ENCODE measurements at regions of chr3 and their contacts with region 1.

Region 1: DNA sequence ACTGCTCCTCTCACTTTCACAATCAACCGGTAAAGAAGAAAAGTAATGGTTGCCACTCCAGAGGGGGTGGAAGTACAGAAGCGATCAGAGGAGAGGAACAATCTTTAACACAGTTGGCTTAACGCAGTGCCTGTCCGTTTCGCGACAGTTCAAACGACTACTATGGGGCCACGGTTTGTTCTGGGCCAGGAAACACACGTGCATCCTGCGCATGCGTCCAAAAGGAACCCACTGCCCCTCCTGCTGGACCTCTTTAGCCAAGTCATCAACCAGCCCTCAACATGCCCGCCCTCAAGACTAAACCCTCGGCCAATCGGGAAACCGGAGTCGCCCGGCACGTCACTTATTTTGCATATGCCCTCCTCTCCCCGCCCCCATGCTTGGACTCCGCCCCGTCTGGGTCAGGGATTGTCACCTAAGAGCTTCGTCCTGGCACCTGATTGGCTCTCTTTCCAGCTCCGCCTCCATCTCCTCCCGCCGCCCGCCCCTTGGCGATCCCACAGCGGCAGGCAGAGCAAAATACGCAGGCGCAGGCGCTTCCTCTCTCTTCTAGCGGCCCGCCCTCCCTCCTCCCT is 345 bp upstream of the CDV3 start:
- DNase-seq: peak; percentile 100
- H3K4me3 ChIP-seq: peak overlapping the region; percentile 45 to 99 (median 84)
- H3K27ac ChIP-seq: peak overlapping the region; percentile 6 to 98 (median 90)
- H3K27me3 ChIP-seq: no peaks in the 10 kb centered on the region
- CTCF ChIP-seq: peak in 27 of 56 donors; percentile 7 to 42 (median 20)

Region 2: DNA sequence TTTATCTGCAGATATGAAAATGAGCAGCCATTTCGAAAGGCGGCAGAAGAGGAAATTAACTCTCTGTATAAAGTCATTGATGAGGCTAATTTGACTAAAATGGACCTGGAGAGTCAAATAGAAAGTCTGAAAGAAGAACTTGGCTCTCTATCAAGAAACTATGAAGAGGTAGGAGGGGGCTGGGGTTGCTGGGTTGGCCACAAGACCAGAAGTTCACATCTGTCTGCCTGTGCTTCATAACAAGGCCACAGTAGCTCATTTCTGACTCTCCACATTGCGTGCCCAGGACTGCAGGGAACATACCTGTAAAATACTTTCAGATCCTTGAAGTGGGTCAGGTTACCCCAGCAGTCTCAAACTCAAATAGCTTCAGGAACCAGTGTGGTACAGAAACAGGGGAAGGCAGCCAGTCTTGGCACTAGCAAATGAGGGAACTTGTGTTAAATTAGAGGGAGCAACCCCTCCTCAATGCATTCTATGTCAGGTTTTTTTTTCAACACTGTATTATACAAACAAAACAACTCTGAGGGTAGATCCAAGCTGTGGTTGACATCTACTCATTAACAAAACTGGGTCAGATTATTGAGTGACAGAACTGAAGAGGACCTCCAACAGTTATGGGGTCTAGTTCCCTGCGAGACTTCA is 124.5 kb before region 1 on chr3:
- intact Hi-C with region 1: loop called (anchors 2 to 10 kb)
- DNase-seq: no peak
- H3K4me3 ChIP-seq: no peak overlapping the region
- H3K27ac ChIP-seq: no peak overlapping the region
- H3K27me3 ChIP-seq: no peaks in the 10 kb centered on the region
- CTCF ChIP-seq: no peak

Measured in dorsolateral prefrontal cortex (tissue), 120 donors.